Motor neuron (in vitro differentiated cells): ENCODE measurements at regions of chr7 and their contacts with region 1.

Region 1: DNA sequence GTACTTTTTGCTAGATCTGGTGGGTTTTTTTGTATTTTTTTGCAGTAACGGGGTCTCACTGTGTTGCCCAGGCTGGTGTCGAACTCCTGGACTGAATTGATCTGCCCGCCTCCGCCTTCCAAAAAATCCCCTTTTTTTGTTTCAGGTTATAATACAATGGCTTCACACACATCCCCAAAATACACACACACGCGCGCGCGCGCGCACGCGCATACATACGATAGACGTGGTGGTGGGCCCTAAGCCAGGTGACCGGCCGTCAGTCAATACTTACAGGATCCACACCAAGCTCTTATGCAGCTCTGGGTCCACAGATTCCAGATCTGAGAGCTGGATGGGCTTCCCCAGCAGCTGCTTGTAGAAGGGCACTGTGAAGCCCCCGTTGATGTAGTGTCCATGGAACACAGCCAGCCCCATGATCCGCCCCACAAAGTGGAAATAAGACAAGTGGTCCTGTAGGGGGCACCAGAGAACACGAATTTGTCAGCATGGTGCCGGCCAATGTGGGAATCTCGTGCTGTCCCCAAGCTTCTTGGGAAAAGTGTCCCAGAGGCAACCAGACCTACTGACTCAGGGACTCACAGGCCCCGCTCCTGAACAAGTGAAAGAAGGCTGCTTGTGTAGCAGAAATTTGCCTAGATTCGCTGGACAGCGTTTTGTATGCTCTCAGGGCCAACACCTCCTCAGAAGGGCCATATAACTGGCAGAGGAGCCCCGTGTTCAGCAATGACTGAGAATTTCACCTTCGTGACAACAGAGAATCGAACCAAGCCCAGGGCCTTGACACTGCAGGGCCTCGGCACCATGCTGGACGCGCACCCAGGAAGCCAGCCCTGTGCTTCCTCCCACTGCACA is 103.6 kb downstream of the SMURF1 start:
- ATAC-seq: peak; percentile 77 to 94 (median 89)
- H3K4me3 ChIP-seq: no peak overlapping the region
- H3K27ac ChIP-seq: no peak overlapping the region
- H3K4me1 ChIP-seq: no peaks in the 10 kb centered on the region

Region 2: GRCh38 chr7:98097042-98097645 is 943.2 kb before region 1 on chr7:
- in situ Hi-C with region 1: no loop called
- ATAC-seq: no peak
- H3K4me3 ChIP-seq: no peak overlapping the region
- H3K27ac ChIP-seq: no peak overlapping the region
- H3K4me1 ChIP-seq: no peaks in the 10 kb centered on the region

Region 3: GRCh38 chr7:98514211-98515031 is 525.9 kb before region 1 on chr7:
- in situ Hi-C with region 1: no loop called
- ATAC-seq: no peak
- H3K4me3 ChIP-seq: no peak overlapping the region
- H3K27ac ChIP-seq: no peak overlapping the region
- H3K4me1 ChIP-seq: no peaks in the 10 kb centered on the region

Region 4: GRCh38 chr7:99143853-99144672 is 103.7 kb after region 1 on chr7 and contains the start of gene SMURF1:
- in situ Hi-C with region 1: loop called in 1 of 9 experiments (anchors 10 kb)
- ATAC-seq: peak; percentile 42 to 69 (median 62)
- H3K4me3 ChIP-seq: peak within 1 kb of the TSS; percentile 68 to 99 (median 94)
- H3K27ac ChIP-seq: peak within 1 kb of the TSS; percentile 93 to 96
- H3K4me1 ChIP-seq: peaks cover 8 to 10% of the 10 kb centered on the region in 2 donors
- total RNA-seq, gene SMURF1: 11.1 to 24.6 (median 17.2) TPM

Region 5: GRCh38 chr7:99312316-99313203 is 272.2 kb after region 1 on chr7:
- in situ Hi-C with region 1: loop called in 5 of 9 experiments (anchors 10 to 25 kb)
- ATAC-seq: peak in 3 of 8 experiments; percentile 65 to 76 (median 69)
- H3K4me3 ChIP-seq: no peak overlapping the region
- H3K27ac ChIP-seq: no peak overlapping the region
- H3K4me1 ChIP-seq: no peaks in the 10 kb centered on the region